ENCODE measurements at regions of chr3 and their contacts with region 1.

Region 1: GRCh38 chr3:133821767-133822638 is 16.4 kb downstream of the SRPRB start:
- DNase-seq: peak in 4 of 5 donors; percentile 35 to 59 (median 48)
- H3K4me3 ChIP-seq: no peak overlapping the region
- H3K27ac ChIP-seq: no peak overlapping the region
- H3K4me1 ChIP-seq: no peaks in the 10 kb centered on the region
- H3K27me3 ChIP-seq: no peaks in the 10 kb centered on the region
- CTCF ChIP-seq: no peak
- EP300 ChIP-seq: no peak
- POLR2A ChIP-seq: no peak

Region 2: GRCh38 chr3:133933095-133934024 is 111.4 kb after region 1 on chr3:
- intact Hi-C with region 1: loop called (anchors 2 to 5 kb)
- DNase-seq: peak in 1 of 5 donors; percentile 20
- H3K4me3 ChIP-seq: no peak overlapping the region
- H3K27ac ChIP-seq: no peak overlapping the region
- H3K4me1 ChIP-seq: peaks cover 4% of the 10 kb centered on the region
- H3K27me3 ChIP-seq: no peaks in the 10 kb centered on the region
- CTCF ChIP-seq: no peak
- EP300 ChIP-seq: no peak
- POLR2A ChIP-seq: no peak

Region 3: DNA sequence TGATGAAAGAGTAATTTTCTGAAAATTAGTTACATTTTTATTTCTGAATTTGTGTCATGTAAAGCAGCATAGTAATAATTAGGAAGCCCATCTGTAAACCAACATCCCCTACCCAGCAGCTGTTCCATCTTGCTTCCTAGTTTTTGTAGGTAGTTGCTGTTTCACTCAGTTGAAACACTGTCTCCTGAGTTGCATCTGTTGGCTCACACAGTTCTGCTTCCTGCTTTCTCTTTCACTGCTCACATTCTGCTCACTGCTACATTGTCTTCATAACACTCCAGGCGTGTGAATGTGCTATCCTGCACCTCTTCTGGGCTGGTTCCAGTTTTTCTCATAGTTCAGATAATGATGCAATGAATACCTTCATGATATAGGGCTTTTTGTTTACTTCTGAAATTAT is 1096.4 kb after region 1 on chr3:
- intact Hi-C with region 1: no loop called
- DNase-seq: no peak
- H3K4me3 ChIP-seq: no peak overlapping the region
- H3K27ac ChIP-seq: no peak overlapping the region
- H3K4me1 ChIP-seq: no peaks in the 10 kb centered on the region
- H3K27me3 ChIP-seq: no peaks in the 10 kb centered on the region
- CTCF ChIP-seq: no peak
- EP300 ChIP-seq: no peak
- POLR2A ChIP-seq: no peak

Measured in ovary (tissue), 10 donors.